Activated naive CD8-positive, alpha-beta T cell treated with anti-CD3 and anti-CD28 coated beads, Interleukin-2, amount 10 ng/mL, durations not matched to agents 7 days and 5 days (primary cell): ENCODE measurements at regions of chr16 and their contacts with region 1.

Region 1: GRCh38 chr16:67641779-67642708 is 2.9 kb upstream of the CARMIL2 start:
- DNase-seq: no peak
- ATAC-seq: no peak
- H3K4me3 Mint-ChIP-seq: no peak overlapping the region
- H3K27ac Mint-ChIP-seq: no peak overlapping the region
- H3K4me1 Mint-ChIP-seq: peaks cover 5% of the 10 kb centered on the region
- H3K27me3 Mint-ChIP-seq: no peaks in the 10 kb centered on the region

Region 2: DNA sequence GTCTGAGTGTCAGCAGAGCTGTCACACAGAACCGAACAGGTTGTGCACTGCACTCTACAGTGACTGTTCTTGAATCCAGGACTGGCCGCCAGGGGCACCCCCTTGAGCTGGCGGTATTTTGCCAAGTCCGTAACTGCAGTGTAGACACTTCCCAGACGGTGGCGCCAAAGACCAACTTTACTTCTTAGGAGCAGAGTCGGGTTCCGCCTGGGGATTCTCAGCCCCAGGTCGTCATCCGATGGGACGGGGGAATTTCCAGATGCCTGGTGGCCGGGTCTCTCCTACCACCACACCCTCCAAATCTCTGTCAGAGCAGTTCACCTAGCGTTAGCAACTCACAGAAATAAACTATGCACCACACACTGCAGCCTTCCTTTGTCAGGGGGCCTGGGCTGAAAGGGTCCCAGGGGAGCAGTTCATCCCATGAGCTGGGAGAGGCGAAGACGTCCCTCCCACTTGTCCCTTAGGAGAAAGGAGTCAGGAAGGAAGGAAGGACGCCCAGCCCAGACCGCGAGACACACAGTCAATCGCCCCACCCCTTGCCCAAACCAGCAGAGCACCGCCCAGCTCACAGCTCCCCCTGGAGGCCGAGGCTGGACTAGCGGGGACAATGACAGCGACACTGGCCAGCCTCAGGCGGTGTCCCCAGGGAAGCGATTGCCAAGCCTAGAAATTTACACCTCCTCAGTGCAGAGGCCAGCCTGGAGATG is 120.8 kb before region 1 on chr16:
- POLR2A ChIA-PET with region 1: interaction called, 28 read pairs
- DNase-seq: peak; percentile 96
- ATAC-seq: peak; percentile 84
- H3K4me3 Mint-ChIP-seq: peak overlapping the region; percentile 85
- H3K27ac Mint-ChIP-seq: peak overlapping the region; percentile 91
- H3K4me1 Mint-ChIP-seq: peaks cover 37% of the 10 kb centered on the region
- H3K27me3 Mint-ChIP-seq: no peaks in the 10 kb centered on the region

Region 3: DNA sequence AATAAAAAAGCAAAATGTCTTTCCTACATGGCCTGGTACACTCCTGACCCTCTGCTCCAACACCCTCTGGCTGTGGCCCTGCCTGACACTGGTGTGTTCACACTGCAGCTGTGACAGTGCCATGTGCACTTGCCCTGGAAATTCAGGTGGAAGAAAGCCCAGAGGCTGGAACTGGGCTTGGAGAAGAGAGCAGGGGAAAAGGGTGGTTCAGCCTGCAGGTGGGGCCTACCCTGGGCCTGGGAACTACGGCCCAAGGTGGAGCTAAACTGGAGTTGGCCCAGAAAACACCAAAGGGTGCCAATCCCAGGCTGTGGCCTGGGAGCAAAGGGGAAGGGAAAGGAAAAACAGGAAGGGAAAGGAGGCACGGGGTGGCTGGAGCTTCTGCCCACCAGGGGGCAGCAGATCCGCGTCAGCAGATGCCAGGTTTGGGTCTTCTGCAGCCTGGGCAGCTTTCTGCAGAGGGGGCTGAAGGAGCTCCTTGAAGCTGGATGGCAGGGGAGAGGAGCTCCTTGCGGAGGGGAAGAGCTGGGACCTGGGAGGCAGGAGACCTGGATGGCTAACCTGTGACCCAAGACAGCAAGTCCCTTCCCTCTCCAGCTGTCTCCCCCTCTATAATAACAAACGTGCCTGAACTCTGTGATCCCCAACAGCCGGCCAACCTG is 95.2 kb before region 1 on chr16:
- POLR2A ChIA-PET with region 1: interaction called, 99 read pairs
- DNase-seq: peak; percentile 83
- ATAC-seq: peak; percentile 44
- H3K4me3 Mint-ChIP-seq: peak overlapping the region; percentile 84
- H3K27ac Mint-ChIP-seq: peak overlapping the region; percentile 99
- H3K4me1 Mint-ChIP-seq: peaks cover 43% of the 10 kb centered on the region
- H3K27me3 Mint-ChIP-seq: no peaks in the 10 kb centered on the region

Region 4: DNA sequence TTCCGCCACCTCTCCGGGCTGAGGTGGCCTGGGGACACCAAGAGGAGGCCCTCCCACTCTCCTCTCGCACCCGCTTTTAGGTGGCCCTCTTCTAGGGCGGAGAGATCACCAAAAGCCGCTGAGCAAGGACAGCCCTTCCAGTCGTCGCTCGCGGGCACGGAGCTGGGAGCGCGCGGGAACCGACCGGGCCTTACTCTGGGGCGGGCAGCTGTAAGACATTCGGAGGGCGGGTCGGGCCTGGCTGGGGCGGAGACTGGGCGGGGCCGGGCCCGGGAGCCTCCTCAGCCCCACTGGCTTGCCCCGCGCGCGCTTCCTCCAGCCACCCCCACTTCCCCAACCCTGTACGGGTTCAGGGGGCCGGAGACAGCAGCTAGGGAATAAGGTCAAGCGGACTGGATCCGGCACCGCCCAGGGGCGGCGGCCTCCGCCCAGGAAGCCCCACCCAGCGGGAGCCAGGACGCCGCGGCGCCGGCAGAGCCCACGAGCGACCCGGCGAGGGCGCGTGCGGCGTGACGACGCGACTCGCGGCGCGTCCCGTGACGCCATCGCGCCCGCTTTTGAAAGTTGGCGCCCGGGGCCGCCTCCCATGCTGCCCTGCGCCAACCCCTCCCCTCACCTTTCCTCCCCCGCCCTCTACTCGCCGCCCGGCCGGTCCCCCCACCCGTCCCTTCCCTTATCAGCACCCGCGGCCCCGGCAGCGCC is 80.1 kb before region 1 on chr16:
- POLR2A ChIA-PET with region 1: interaction called, 66 read pairs
- DNase-seq: peak; percentile 99
- ATAC-seq: peak; percentile 90
- H3K4me3 Mint-ChIP-seq: peak overlapping the region; percentile 89
- H3K27ac Mint-ChIP-seq: peak overlapping the region; percentile 92
- H3K4me1 Mint-ChIP-seq: peaks cover 28% of the 10 kb centered on the region
- H3K27me3 Mint-ChIP-seq: no peaks in the 10 kb centered on the region

Region 5: DNA sequence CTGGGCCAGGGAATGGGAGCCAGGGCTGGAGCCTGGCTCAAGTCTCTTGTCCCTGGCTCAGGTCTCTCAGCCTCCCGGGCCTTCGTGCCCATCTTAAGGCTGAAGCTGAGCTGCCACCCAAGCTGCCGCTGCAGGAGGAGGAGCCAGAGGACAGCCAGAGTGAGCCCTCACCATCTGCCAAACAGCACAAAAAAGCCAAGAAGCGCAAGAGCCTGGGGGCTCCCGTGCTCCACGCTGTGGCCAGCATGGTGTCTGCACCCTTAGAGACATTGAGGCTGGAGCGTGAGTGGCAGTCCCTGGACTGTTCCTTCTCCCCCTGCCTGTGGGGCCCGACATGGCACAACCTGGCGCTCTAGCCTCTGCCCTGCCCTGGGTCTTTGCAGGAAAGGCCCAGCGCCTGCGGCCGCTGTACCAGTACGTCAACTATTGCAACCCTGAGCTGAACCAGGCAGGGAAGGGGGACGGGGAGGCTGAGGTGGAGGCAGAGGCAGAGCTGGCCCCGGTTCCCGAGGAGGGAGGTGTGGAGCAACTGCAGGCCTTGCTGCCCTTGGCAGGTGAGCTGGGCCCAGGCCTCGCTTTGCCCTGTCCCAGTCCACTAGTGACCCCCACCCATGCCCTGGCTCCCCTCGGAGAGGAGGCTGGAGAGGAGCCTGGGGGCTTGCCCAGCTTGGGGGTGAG is 25.9 kb after region 1 on chr16:
- POLR2A ChIA-PET with region 1: interaction called, 16 read pairs
- DNase-seq: peak; percentile 81
- ATAC-seq: peak; percentile 91
- H3K4me3 Mint-ChIP-seq: peak overlapping the region; percentile 93
- H3K27ac Mint-ChIP-seq: no peak overlapping the region
- H3K4me1 Mint-ChIP-seq: peaks cover 9% of the 10 kb centered on the region
- H3K27me3 Mint-ChIP-seq: no peaks in the 10 kb centered on the region

Region 6: GRCh38 chr16:67683767-67684385 is 41.8 kb after region 1 on chr16:
- POLR2A ChIA-PET with region 1: no interaction called
- DNase-seq: no peak
- ATAC-seq: no peak
- H3K4me3 Mint-ChIP-seq: no peak overlapping the region
- H3K27ac Mint-ChIP-seq: no peak overlapping the region
- H3K4me1 Mint-ChIP-seq: no peaks in the 10 kb centered on the region
- H3K27me3 Mint-ChIP-seq: no peaks in the 10 kb centered on the region

Region 7: GRCh38 chr16:67708368-67708861 is 66.4 kb after region 1 on chr16:
- POLR2A ChIA-PET with region 1: no interaction called
- DNase-seq: no peak
- ATAC-seq: no peak
- H3K4me3 Mint-ChIP-seq: no peak overlapping the region
- H3K27ac Mint-ChIP-seq: no peak overlapping the region
- H3K4me1 Mint-ChIP-seq: peaks cover 8% of the 10 kb centered on the region
- H3K27me3 Mint-ChIP-seq: no peaks in the 10 kb centered on the region